Psoas muscle (tissue), 8 donors: ENCODE measurements at regions of chr3 and their contacts with region 1.

Region 1: DNA sequence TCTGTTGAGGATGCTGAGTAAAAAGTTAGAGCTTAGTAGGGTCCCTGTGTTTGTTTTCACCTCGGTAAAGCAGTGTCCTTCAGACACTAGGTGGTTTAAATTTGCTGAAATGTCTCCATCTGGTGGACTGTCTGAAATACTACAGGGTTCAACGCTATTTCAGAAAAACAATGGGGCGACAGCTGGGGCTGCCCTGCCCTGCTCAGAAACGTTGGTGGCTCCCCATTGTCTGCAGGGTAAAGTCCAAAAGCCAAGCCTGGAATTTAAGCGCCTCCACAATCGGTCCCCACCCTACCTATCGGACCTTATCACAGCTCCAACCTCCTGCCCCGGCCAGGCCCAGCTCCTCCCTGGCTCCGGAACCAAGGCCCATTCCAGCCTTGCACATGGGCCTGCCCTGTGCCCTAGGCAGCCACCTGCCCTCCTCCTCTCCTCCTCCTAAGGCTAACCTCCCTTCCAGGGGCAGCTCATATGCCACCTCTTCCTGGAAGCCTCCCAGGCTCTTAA is 4.3 kb upstream of the TSEN2 start:
- DNase-seq: no peak
- ATAC-seq: peak in 2 of 4 donors; percentile 26
- H3K4me3 ChIP-seq: no peak overlapping the region
- H3K27ac ChIP-seq: no peak overlapping the region
- H3K4me1 ChIP-seq: peaks cover 8% of the 10 kb centered on the region
- H3K27me3 ChIP-seq: no peaks in the 10 kb centered on the region
- CTCF ChIP-seq: peak; percentile 76

Region 2: GRCh38 chr3:12135029-12135657 is 344.8 kb before region 1 on chr3:
- intact Hi-C with region 1: loop called (anchors 2 kb)
- DNase-seq: peak; percentile 72 to 82
- ATAC-seq: peak; percentile 83 to 89 (median 85)
- H3K4me3 ChIP-seq: no peak overlapping the region
- H3K27ac ChIP-seq: no peak overlapping the region
- H3K4me1 ChIP-seq: peaks cover 20% of the 10 kb centered on the region
- H3K27me3 ChIP-seq: no peaks in the 10 kb centered on the region
- CTCF ChIP-seq: peak; percentile 95

Region 3: DNA sequence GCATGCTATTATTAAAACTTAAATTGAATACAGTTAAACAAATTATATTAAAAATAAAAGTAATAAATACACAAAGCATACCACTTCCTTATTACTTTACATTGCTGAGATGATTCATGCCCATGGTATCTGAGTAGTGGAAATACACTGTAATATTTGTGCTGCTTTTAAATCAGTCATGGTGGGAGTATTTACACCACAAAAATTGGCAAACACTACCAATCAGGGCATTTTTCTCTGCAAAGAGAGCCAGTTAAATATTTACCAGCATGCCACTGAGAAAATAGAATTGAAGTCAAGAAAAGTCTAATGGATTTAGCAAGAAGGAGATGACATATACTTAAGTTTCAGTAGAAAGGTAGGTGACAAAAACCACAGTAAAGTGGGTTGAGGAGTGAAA is 171.5 kb before region 1 on chr3:
- intact Hi-C with region 1: no loop called
- DNase-seq: no peak
- ATAC-seq: no peak
- H3K4me3 ChIP-seq: no peak overlapping the region
- H3K27ac ChIP-seq: no peak overlapping the region
- H3K4me1 ChIP-seq: no peaks in the 10 kb centered on the region
- H3K27me3 ChIP-seq: peaks cover 0 to 5% (median 3%) of the 10 kb centered on the region in 3 donors
- CTCF ChIP-seq: no peak

Region 4: GRCh38 chr3:12663936-12664908 is 184.2 kb after region 1 on chr3 and contains the start of gene RAF1:
- intact Hi-C with region 1: no loop called
- DNase-seq: peak; percentile 99
- ATAC-seq: peak; percentile 89 to 94 (median 92)
- H3K4me3 ChIP-seq: peak within 1 kb of the TSS; percentile 92
- H3K27ac ChIP-seq: peak within 1 kb of the TSS; percentile 99
- H3K4me1 ChIP-seq: peaks cover 30% of the 10 kb centered on the region
- H3K27me3 ChIP-seq: no peaks in the 10 kb centered on the region
- CTCF ChIP-seq: no peak
- total RNA-seq, gene RAF1: 109 to 221 (median 160) TPM